GM10248 (cell line): ENCODE measurements at regions of chr1 and their contacts with region 1.

Region 1: DNA sequence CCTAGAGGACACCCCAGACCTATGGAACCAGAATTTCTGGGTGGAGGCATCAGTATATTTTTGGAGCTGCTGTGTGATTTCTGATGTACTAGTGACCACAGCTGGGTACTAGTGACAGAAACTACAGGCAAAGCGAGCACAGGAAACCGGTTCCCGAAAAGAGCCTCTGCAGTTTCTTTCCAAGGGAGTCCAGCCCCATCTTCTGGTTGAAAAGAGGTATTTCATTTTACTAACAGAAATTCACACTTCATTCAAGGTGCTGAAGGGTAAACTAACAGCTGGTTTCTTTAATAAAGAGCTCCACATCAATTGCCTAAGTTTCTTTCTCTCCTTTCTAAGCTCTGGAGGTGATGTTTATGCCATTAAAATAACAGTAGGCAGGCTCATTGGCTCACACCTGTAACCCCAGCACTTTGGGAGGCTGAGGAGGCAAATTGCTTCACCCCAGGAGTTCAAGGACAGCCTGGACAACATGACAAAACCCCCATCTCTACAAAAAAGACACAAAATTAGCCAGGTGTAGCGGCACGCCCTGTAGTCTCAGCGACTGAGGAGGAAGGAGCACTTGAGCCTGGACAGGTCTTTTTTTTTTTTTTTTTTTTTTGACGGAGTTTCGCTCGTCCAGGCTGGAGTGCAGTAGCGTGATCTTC is 22.0 kb downstream of the THAP3 start:
- DNase-seq: peak; percentile 63
- CTCF ChIP-seq: peak; percentile 37

Region 2: DNA sequence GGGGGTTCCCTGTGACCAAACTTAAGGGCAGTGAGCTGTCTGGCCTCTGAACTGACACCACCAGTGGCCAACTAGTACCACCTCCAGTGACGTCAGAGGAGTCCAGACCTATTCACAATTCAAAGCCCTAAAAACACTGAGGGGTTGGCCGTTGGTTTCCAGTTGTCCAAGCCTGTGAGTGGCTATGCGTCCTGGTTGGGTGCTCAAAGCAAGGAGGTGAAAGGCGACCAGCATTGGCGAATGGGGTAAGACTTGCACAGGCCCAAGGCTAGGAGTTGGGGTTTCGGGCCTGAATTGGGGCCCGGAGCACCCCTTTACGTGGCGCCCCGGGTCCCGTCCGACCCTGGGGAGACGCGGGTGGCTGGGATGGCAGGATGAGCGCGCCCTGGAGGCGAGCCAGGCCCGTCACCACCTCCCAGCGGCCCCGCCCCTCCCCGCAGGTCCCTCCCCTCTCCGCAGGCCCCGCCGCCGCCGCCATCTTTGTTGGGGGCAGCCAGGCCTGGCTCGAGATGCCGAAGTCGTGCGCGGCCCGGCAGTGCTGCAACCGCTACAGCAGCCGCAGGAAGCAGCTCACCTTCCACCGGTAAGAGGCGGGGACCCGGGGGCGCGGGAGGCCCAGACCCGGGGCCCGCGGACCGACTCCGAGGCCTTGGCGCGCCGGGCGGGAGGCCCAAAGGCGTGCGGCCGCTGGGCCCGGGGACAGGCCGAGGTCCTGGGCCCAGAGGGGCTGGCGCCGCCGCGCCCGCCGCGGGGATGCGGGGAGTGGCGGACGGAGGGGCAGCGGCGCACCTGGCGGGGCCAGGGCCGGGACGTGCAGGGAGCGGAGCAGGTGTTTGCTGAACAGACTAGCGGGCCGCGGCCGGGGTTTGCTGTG is 21.7 kb before region 1 on chr1 and contains the start of gene THAP3:
- CTCF ChIA-PET with region 1: interaction called, 10 read pairs
- POLR2A ChIA-PET with region 1: no interaction called
- DNase-seq: peak; percentile 94
- CTCF ChIP-seq: peak; percentile 29